BJ (cell line): ENCODE measurements at regions of chr12 and their contacts with region 1.

Region 1: GRCh38 chr12:66945189-66945817 is 266.4 kb upstream of the GRIP1 start:
- DNase-seq: no peak
- H3K4me3 ChIP-seq: no peak overlapping the region
- H3K27me3 ChIP-seq: no peaks in the 10 kb centered on the region
- CTCF ChIP-seq: no peak

Region 2: GRCh38 chr12:66885115-66885875 is 60.0 kb before region 1 on chr12:
- CTCF ChIA-PET with region 1: no interaction called
- POLR2A ChIA-PET with region 1: interaction called, 12 read pairs
- DNase-seq: no peak
- H3K4me3 ChIP-seq: no peak overlapping the region
- H3K27me3 ChIP-seq: no peaks in the 10 kb centered on the region
- CTCF ChIP-seq: no peak